Psoas muscle (tissue), 8 donors: ENCODE measurements at regions of chr1 and their contacts with region 1.

Region 1: DNA sequence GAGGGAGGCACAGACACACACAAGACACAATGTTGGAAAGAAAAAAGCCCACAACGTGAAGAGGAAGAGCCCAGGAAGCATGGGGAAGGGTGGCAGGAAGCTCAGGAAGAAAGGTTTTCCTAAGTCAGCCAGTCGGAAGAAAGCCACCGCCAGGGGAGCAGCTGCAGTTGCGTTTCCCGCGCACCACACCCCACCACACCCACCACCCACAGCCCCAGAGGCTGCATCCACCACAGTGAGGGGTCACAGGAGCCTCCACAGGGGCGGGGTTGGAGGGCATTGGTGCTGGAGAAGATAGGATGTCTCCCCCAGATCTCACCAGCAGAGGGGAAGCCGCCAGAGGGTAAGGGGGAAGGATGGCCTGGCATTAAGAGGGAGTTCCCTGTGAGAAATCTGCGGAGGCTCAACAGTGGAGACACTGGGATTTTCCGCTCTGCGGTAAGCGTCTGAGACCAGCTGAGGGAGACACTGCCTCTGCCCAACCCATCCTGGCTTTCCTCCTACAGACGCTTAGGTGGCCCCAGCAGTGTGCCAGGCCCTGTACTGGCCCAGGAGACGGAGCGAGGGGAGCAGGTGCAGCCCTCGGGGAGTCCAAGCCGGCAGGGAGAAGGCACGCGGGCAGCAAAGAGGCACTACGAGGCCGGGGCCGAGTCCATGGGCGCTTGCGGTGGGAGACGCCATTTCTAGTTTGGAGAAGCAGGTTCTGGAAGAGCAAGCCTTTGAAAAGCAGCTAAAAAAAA is 19.8 kb downstream of the PGLYRP3 start:
- DNase-seq: no peak
- ATAC-seq: no peak
- H3K4me3 ChIP-seq: no peak overlapping the region
- H3K27ac ChIP-seq: no peak overlapping the region
- H3K4me1 ChIP-seq: no peaks in the 10 kb centered on the region
- H3K27me3 ChIP-seq: peaks cover 0 to 24% (median 4%) of the 10 kb centered on the region in 3 donors
- CTCF ChIP-seq: no peak

Region 2: DNA sequence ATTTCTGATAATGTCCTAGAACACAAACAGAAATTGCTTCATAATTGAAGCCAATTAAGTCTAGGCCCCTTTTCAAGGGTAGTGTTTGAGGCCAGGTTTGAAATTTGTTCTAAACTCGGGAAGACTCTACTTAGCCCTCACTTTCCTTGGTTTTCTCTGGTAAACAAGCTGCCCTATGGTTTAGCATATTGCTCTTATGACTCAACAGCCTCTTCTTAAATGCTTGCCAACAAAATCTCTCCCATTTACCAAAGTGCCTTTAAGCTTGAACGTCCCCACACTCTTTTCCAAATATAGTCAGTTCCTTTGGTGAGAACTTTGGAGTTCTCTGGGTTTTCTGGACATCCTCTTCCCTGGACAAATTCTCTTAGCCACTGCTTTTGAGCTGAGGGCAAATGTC is 456.0 kb before region 1 on chr1:
- intact Hi-C with region 1: no loop called
- DNase-seq: no peak
- ATAC-seq: no peak
- H3K4me3 ChIP-seq: no peak overlapping the region
- H3K27ac ChIP-seq: no peak overlapping the region
- H3K4me1 ChIP-seq: no peaks in the 10 kb centered on the region
- H3K27me3 ChIP-seq: no peaks in the 10 kb centered on the region
- CTCF ChIP-seq: no peak

Region 3: DNA sequence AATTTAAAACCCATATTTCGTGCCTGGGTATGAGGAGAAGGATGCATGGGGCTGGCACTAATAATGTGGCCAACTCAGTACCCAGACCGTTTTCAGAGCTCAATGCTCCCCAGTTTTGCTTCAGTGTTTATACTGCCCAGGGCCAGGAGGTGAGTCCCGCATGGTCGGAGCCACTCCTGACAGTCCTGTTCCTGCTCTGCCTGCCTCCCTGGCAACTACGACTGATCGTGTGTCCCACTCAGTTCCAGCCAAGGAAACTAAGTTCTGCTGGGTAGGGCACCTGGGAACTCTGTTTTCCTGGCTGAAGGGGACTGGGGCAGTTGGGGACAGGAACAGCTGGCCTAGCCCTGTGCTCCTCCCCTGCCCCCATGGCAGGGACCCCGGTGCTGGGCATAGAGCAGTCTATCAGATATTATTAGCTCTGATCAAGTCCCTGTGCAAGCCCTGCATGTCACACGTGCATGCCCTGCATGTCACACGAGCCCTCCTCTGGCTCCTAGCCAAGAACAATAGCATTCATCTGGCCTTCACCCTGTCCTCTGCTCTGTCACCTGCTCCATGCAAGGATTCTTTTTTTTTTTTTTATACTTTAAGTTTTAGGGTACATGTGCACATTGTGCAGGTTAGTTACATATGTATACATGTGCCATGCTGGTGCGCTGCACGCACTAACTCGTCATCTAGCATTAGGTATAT is 148.5 kb after region 1 on chr1:
- intact Hi-C with region 1: loop called in 1 of 2 experiments (anchors 5 kb)
- DNase-seq: no peak
- ATAC-seq: no peak
- H3K4me3 ChIP-seq: no peak overlapping the region
- H3K27ac ChIP-seq: no peak overlapping the region
- H3K4me1 ChIP-seq: no peaks in the 10 kb centered on the region
- H3K27me3 ChIP-seq: peaks cover 0 to 10% (median 6%) of the 10 kb centered on the region in 3 donors
- CTCF ChIP-seq: no peak